CD8-positive, alpha-beta T cell (primary cell): ENCODE measurements at regions of chr3 and their contacts with region 1.

Region 1: GRCh38 chr3:194486540-194487288 is at the start of gene ATP13A3:
- DNase-seq: peak; percentile 83 to 96 (median 90)
- ATAC-seq: peak; percentile 80
- H3K4me3 ChIP-seq: peak within 1 kb of the TSS; percentile 74 to 98
- H3K4me3 Mint-ChIP-seq: peak within 1 kb of the TSS; percentile 93
- H3K27ac ChIP-seq: peak within 1 kb of the TSS; percentile 58 to 85
- H3K27ac Mint-ChIP-seq: peak within 1 kb of the TSS; percentile 92
- H3K4me1 ChIP-seq: peaks cover 29% of the 10 kb centered on the region
- H3K4me1 Mint-ChIP-seq: peaks cover 43% of the 10 kb centered on the region
- H3K27me3 ChIP-seq: no peaks in the 10 kb centered on the region
- H3K27me3 Mint-ChIP-seq: no peaks in the 10 kb centered on the region
- CTCF ChIP-seq: no peak
- total RNA-seq, gene ATP13A3: 50.2 to 52.8 TPM

Region 2: GRCh38 chr3:194134757-194135528 is 351.8 kb before region 1 on chr3:
- CTCF ChIA-PET with region 1: no interaction called
- POLR2A ChIA-PET with region 1: no interaction called
- intact Hi-C with region 1: loop called (anchors 5 to 10 kb)
- DNase-seq: peak; percentile 56 to 90 (median 75)
- ATAC-seq: peak; percentile 67
- H3K4me3 ChIP-seq: peak overlapping the region; percentile 41 to 52
- H3K4me3 Mint-ChIP-seq: peak overlapping the region; percentile 86
- H3K27ac ChIP-seq: no peak overlapping the region
- H3K27ac Mint-ChIP-seq: peak overlapping the region; percentile 91
- H3K4me1 ChIP-seq: peaks cover 41% of the 10 kb centered on the region
- H3K4me1 Mint-ChIP-seq: peaks cover 48% of the 10 kb centered on the region
- H3K27me3 ChIP-seq: peaks cover 32 to 40% of the 10 kb centered on the region in 2 experiments
- H3K27me3 Mint-ChIP-seq: peaks cover 65% of the 10 kb centered on the region
- CTCF ChIP-seq: no peak

Region 3: GRCh38 chr3:194407420-194407819 is 79.3 kb before region 1 on chr3:
- CTCF ChIA-PET with region 1: no interaction called
- POLR2A ChIA-PET with region 1: no interaction called
- intact Hi-C with region 1: no loop called
- DNase-seq: no peak
- ATAC-seq: no peak
- H3K4me3 ChIP-seq: no peak overlapping the region
- H3K4me3 Mint-ChIP-seq: no peak overlapping the region
- H3K27ac ChIP-seq: no peak overlapping the region
- H3K27ac Mint-ChIP-seq: no peak overlapping the region
- H3K4me1 ChIP-seq: no peaks in the 10 kb centered on the region
- H3K4me1 Mint-ChIP-seq: peaks cover 2% of the 10 kb centered on the region
- H3K27me3 ChIP-seq: no peaks in the 10 kb centered on the region
- H3K27me3 Mint-ChIP-seq: no peaks in the 10 kb centered on the region
- CTCF ChIP-seq: no peak

Region 4: DNA sequence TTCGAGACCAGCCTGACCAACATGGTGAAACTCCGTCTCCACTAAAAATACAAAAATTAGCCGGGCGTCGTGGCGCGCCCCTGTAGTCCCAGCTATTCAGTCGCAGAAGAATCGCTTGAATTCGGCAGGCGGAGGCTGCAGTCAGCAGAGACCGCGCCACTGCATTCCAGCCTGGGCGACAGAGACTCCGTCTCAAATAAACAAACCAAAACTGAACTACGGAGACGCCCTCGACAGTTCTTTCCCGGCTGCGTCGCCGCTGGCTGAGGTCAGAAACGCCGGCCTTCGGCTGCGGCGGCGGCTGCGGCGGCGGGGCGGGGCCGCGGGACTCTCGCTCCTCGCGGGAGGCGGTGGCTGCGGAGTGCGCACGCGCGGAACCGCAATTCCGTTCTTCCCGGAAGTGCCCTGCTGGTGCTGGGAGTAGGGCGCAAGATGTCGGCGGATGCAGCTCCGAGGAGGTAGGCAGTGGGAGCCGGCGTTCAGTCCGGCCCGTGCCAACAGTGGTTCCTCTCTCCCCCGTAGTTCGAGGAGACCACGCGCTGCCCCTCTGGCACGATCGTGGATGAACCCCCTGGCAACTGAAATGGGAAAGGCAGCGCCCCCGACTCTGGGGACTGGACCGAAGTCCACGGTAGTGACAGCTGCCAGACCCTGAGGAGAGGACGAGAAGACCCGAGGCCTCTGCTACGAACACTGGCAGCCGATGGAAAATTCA is 97.0 kb after region 1 on chr3:
- CTCF ChIA-PET with region 1: no interaction called
- POLR2A ChIA-PET with region 1: interaction called, 8 read pairs
- intact Hi-C with region 1: loop called (anchors 1 kb)
- DNase-seq: peak; percentile 84 to 96 (median 93)
- ATAC-seq: peak; percentile 94
- H3K4me3 ChIP-seq: peak overlapping the region; percentile 75 to 99
- H3K4me3 Mint-ChIP-seq: peak overlapping the region; percentile 91
- H3K27ac ChIP-seq: peak overlapping the region; percentile 64 to 94
- H3K27ac Mint-ChIP-seq: peak overlapping the region; percentile 94
- H3K4me1 ChIP-seq: peaks cover 12% of the 10 kb centered on the region
- H3K4me1 Mint-ChIP-seq: peaks cover 10% of the 10 kb centered on the region
- H3K27me3 ChIP-seq: no peaks in the 10 kb centered on the region
- H3K27me3 Mint-ChIP-seq: no peaks in the 10 kb centered on the region
- CTCF ChIP-seq: no peak

Region 5: DNA sequence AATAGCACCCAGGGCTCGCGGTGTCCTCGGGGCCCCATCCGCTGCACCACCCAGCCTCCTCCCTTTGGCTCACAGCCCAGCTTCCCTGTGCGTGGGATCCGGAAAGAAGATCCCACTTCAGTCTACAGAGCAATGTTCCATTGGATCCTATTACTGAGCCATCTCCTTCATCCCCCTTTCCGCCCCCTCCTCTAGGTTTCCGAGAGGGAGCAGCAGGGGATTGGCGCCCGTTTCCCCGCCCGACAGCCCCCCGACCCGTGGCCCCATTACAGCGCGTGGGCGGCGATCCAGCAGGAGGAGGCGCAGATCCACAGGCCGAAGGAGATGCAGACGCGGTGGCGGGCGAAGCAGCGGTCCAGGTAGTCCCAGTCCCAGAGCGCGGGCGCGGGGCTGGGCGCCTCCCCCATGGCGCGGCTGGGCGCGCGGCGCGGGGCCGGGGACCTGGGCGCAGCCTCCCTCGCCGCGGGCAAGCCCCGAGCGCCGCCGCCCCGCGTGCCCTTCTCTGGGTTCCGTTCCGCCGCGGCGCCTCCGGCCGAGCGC is 146.2 kb after region 1 on chr3:
- CTCF ChIA-PET with region 1: no interaction called
- POLR2A ChIA-PET with region 1: no interaction called
- intact Hi-C with region 1: loop called in 1 of 2 experiments (anchors 2 kb)
- DNase-seq: peak in 2 of 9 experiments; percentile 2 to 22
- ATAC-seq: peak; percentile 43
- H3K4me3 ChIP-seq: peak overlapping the region; percentile 57 to 58
- H3K4me3 Mint-ChIP-seq: peak overlapping the region; percentile 90
- H3K27ac ChIP-seq: no peak overlapping the region
- H3K27ac Mint-ChIP-seq: peak overlapping the region; percentile 52
- H3K4me1 ChIP-seq: peaks cover 7% of the 10 kb centered on the region
- H3K4me1 Mint-ChIP-seq: peaks cover 9% of the 10 kb centered on the region
- H3K27me3 ChIP-seq: no peaks in the 10 kb centered on the region
- H3K27me3 Mint-ChIP-seq: no peaks in the 10 kb centered on the region
- CTCF ChIP-seq: no peak

Region 6: DNA sequence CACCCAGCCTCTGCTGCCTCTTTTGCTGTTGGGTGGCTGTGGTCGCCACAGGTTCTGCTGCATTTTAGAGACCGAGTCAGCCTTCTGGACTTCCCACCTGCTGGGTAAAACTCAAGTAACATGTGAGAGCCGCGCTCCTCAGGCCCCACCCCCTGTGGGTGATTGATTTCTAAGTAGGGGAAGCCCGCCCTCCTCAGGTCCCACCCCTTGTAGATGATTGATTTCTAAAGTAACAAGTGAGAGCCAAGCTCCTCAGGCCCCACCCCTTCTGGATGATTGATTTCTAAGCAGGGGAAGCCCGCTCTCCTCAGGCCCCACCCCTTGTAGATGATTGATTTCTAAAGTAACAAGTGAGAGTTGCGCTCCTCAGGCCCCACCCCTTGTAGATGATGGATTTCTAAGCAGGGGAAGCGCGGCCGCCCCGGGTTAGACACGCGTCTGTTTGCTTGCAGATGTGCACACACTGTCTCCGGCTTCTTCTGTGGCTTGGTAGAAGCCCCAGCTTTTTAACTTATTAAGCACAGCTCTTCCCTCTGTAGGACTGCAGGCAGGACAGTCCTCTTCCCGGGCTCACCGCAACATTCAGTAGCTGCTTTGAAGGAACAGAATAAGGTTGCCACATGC is 282.4 kb after region 1 on chr3:
- CTCF ChIA-PET with region 1: no interaction called
- POLR2A ChIA-PET with region 1: no interaction called
- intact Hi-C with region 1: loop called (anchors 2 to 5 kb)
- DNase-seq: peak; percentile 82 to 98 (median 89)
- ATAC-seq: peak; percentile 96
- H3K4me3 ChIP-seq: peak overlapping the region; percentile 45 to 51
- H3K4me3 Mint-ChIP-seq: peak overlapping the region; percentile 84
- H3K27ac ChIP-seq: peak overlapping the region; percentile 15 to 71
- H3K27ac Mint-ChIP-seq: peak overlapping the region; percentile 92
- H3K4me1 ChIP-seq: peaks cover 11% of the 10 kb centered on the region
- H3K4me1 Mint-ChIP-seq: peaks cover 26% of the 10 kb centered on the region
- H3K27me3 ChIP-seq: peaks cover 0 to 2% of the 10 kb centered on the region in 2 experiments
- H3K27me3 Mint-ChIP-seq: peaks cover 7% of the 10 kb centered on the region
- CTCF ChIP-seq: no peak

Region 7: DNA sequence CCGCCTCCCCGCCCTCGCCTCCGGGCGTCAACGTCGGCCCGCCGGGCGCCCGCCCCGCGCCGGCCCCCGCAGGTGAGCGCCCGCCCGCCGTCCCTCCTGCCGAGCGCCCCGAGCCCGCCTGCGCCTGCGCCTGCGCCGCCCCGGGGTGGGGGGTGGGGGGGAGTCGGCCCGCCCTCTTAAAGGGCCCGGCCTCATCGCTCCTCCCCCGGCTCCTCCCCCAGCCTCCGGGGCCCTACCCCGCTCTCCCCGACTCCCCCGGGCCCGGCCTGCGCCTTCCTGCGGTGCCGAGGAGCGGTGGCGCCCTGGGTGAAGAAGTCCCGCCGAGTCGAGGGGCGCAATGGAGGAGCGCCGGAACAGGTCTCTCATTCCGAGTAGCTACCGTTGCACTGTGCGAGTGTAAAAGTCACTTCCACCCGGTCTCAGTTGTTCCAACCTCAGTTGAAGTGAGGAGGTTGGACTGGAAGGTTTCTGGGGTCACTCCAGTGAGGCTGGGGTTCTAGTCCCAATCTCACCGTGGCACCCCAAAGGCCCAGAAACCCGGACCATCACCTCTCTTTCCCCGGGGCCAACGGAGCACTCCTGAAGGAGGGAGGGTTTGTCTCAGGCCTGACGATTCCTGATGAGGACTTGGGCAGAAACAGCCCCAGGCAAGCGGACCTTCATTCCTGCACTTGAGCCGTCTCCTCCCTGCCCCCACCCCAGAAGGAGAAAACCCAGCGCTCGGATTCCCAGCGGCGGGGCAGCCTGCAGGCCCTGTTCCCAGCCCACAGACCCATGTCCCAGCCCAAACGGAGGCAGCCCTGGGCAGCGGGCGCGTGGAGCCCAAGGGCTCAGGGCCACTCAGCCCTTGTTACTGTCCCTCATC is 1423.2 kb after region 1 on chr3:
- CTCF ChIA-PET with region 1: no interaction called
- POLR2A ChIA-PET with region 1: no interaction called
- intact Hi-C with region 1: loop called in 1 of 2 experiments (anchors 10 kb)
- DNase-seq: peak; percentile 79 to 95 (median 90)
- ATAC-seq: peak; percentile 61
- H3K4me3 ChIP-seq: peak overlapping the region; percentile 32 to 52
- H3K4me3 Mint-ChIP-seq: peak overlapping the region; percentile 77
- H3K27ac ChIP-seq: peak overlapping the region; percentile 35 to 51
- H3K27ac Mint-ChIP-seq: peak overlapping the region; percentile 78
- H3K4me1 ChIP-seq: peaks cover 37% of the 10 kb centered on the region
- H3K4me1 Mint-ChIP-seq: peaks cover 36% of the 10 kb centered on the region
- H3K27me3 ChIP-seq: no peaks in the 10 kb centered on the region
- H3K27me3 Mint-ChIP-seq: no peaks in the 10 kb centered on the region
- CTCF ChIP-seq: no peak

Region 8: DNA sequence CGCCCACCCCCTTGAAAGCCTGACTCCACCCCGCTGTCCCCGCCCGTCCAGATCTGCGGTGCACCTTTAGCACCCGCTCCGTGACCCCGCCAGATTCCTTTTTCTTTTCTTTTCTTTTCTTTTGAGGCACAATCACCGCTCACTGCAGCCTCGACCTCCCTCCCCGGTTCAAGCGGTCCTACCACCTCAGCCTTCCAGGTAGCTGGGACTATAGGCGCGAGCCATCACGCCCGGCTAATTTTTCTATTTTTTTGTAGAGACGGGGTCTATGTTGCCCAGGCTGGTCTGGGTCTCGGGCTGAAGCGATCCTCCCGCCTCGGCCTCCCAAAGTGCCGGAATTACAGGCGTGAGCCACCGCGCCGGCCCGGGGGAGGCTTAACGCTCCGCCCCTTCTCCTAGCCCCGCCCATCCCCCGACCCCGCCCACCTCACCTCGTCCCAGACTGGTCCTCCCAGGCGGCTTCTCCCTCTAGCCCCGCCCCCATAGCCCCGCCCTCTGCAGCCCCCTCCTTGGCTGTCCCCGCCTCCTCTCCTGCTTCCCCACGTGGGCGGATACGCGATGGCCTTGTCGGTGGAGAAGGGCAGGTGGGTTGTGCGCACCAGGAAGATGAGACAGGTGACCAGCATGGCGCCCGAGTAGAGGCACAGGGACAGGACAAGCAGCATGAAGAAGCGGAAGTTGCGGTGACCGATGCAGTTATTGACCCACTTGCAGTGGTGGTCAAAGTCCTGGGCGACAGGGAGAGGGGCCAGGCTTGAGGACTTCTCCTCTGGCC is 1721.3 kb after region 1 on chr3:
- CTCF ChIA-PET with region 1: no interaction called
- POLR2A ChIA-PET with region 1: no interaction called
- intact Hi-C with region 1: loop called in 1 of 2 experiments (anchors 10 kb)
- DNase-seq: peak; percentile 34 to 83 (median 64)
- ATAC-seq: peak; percentile 78
- H3K4me3 ChIP-seq: peak overlapping the region; percentile 57 to 71
- H3K4me3 Mint-ChIP-seq: peak overlapping the region; percentile 85
- H3K27ac ChIP-seq: no peak overlapping the region
- H3K27ac Mint-ChIP-seq: peak overlapping the region; percentile 38
- H3K4me1 ChIP-seq: peaks cover 7% of the 10 kb centered on the region
- H3K4me1 Mint-ChIP-seq: peaks cover 12% of the 10 kb centered on the region
- H3K27me3 ChIP-seq: no peaks in the 10 kb centered on the region
- H3K27me3 Mint-ChIP-seq: no peaks in the 10 kb centered on the region
- CTCF ChIP-seq: no peak